Posterior vena cava (tissue), 2 donors: ENCODE measurements at regions of chr2 and their contacts with region 1.

Region 1: GRCh38 chr2:124339709-124340108 is 314.6 kb downstream of the CNTNAP5 start:
- DNase-seq: no peak

Region 2: DNA sequence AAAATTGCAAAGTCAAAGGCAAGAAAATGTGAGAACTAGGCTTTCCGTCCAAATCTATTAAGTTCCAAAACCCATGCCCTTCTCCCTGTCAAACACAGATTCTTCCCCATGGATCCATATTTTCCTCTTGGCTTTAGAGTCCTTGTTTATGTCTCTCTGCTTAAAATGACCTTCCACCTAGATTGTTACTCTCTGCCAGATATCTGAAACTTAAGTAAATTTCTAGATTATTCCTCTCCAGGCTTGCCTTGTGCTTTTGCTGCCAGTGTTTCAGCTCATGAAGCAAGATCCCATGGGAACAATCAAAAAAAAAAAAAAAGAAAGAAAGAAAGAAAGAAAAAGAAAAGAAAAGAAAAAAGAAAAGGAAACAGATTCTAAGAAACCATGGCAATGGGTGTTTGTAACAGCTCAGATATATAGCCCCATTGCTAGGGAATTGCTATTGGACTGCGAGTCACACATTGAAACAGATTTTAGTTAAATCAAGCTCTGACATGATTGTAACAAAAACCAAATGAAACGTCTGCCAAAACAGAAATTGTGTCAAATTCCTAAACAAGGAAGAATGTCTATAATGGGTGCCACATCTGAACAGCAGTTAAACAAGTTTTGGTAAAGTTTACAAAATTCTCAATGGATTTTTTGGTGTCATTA is 975.3 kb before region 1 on chr2:
- intact Hi-C with region 1: loop called in 1 of 2 experiments (anchors 5 kb)
- DNase-seq: no peak

Region 3: GRCh38 chr2:124501575-124502152 is 162.0 kb after region 1 on chr2:
- intact Hi-C with region 1: no loop called
- DNase-seq: no peak

Region 4: GRCh38 chr2:124804014-124804940 is 464.6 kb after region 1 on chr2:
- intact Hi-C with region 1: no loop called
- DNase-seq: no peak